CD4-positive, alpha-beta T cell (primary cell): ENCODE measurements at regions of chr7 and their contacts with region 1.

Region 1: GRCh38 chr7:44490351-44491200 is at the start of gene NUDCD3:
- DNase-seq: peak; percentile 71 to 91 (median 78)
- ATAC-seq: peak; percentile 71
- H3K4me3 ChIP-seq: peak within 1 kb of the TSS; percentile 84
- H3K4me3 Mint-ChIP-seq: peak within 1 kb of the TSS; percentile 84
- H3K27ac ChIP-seq: peak within 1 kb of the TSS; percentile 95 to 97
- H3K27ac Mint-ChIP-seq: peak within 1 kb of the TSS; percentile 91
- H3K4me1 ChIP-seq: peaks cover 32% of the 10 kb centered on the region
- H3K4me1 Mint-ChIP-seq: peaks cover 48% of the 10 kb centered on the region
- H3K27me3 ChIP-seq: no peaks in the 10 kb centered on the region
- H3K27me3 Mint-ChIP-seq: peaks cover 3% of the 10 kb centered on the region
- CTCF ChIP-seq: peak; percentile 28
- total RNA-seq, gene NUDCD3: 56.6 to 60.6 TPM

Region 2: GRCh38 chr7:43925984-43926797 is 564.4 kb before region 1 on chr7 and contains the start of gene UBE2D4:
- CTCF ChIA-PET with region 1: no interaction called
- POLR2A ChIA-PET with region 1: interaction called, 4 read pairs
- intact Hi-C with region 1: loop called in 1 of 2 experiments (anchors 5 kb)
- DNase-seq: peak; percentile 80 to 93 (median 86)
- ATAC-seq: peak; percentile 85
- H3K4me3 ChIP-seq: peak within 1 kb of the TSS; percentile 67
- H3K4me3 Mint-ChIP-seq: peak within 1 kb of the TSS; percentile 95
- H3K27ac ChIP-seq: peak within 1 kb of the TSS; percentile 80 to 89
- H3K27ac Mint-ChIP-seq: peak within 1 kb of the TSS; percentile 97
- H3K4me1 ChIP-seq: peaks cover 33% of the 10 kb centered on the region
- H3K4me1 Mint-ChIP-seq: peaks cover 48% of the 10 kb centered on the region
- H3K27me3 ChIP-seq: no peaks in the 10 kb centered on the region
- H3K27me3 Mint-ChIP-seq: no peaks in the 10 kb centered on the region
- CTCF ChIP-seq: no peak
- total RNA-seq, gene UBE2D4: 6.1 to 7.8 TPM

Region 3: GRCh38 chr7:44112231-44113000 is 378.2 kb before region 1 on chr7:
- CTCF ChIA-PET with region 1: no interaction called
- POLR2A ChIA-PET with region 1: no interaction called
- intact Hi-C with region 1: no loop called
- DNase-seq: no peak
- ATAC-seq: no peak
- H3K4me3 ChIP-seq: no peak overlapping the region
- H3K4me3 Mint-ChIP-seq: no peak overlapping the region
- H3K27ac ChIP-seq: no peak overlapping the region
- H3K27ac Mint-ChIP-seq: no peak overlapping the region
- H3K4me1 ChIP-seq: no peaks in the 10 kb centered on the region
- H3K4me1 Mint-ChIP-seq: no peaks in the 10 kb centered on the region
- H3K27me3 ChIP-seq: no peaks in the 10 kb centered on the region
- H3K27me3 Mint-ChIP-seq: no peaks in the 10 kb centered on the region
- CTCF ChIP-seq: no peak

Region 4: DNA sequence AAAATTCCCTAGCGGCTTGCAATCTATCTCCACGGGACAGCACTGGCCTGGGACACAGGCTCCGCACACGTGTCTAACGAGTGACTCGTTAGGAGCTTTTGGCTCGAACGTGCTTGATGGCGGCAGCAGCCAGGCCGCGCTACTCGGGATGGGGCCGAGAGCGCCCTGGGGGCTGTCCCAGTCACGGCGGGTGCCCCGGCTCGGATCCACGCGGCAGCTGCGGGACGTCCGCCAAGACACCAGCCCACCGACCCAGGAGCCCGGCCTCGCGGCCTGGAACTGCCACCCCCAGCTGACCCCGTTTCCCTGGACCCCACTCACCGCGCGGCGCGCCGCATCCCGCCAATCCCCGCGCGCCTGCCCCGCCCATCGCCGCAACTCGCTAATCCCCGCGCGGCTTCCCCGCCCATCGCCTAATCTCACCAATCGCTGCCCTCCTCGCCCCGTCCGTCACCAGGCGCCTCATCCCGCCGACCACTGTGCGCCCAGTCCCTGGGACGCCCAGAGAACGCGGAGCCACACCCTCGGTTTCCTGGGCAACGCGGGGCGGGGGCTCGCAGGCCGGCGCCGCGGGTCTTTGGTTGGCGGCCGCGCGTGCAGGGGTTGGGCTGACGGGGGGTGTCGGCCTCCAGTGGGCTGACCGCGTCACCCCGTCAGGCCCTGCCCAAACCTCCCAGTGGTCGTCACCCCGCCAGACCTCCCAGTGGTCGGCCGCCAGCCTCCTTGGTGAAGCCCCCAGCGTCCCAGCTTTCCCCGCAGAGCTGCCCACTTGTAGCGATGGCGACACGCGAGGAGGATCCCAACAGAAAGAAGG is 367.2 kb before region 1 on chr7 and contains the start of gene POLD2:
- CTCF ChIA-PET with region 1: interaction called, 3 read pairs
- POLR2A ChIA-PET with region 1: interaction called, 15 read pairs
- intact Hi-C with region 1: loop called in 1 of 2 experiments (anchors 10 kb)
- DNase-seq: peak; percentile 91 to 98 (median 97)
- ATAC-seq: peak; percentile 98
- H3K4me3 ChIP-seq: peak within 1 kb of the TSS; percentile 82
- H3K4me3 Mint-ChIP-seq: peak within 1 kb of the TSS; percentile 92
- H3K27ac ChIP-seq: peak within 1 kb of the TSS; percentile 33 to 67
- H3K27ac Mint-ChIP-seq: peak within 1 kb of the TSS; percentile 65
- H3K4me1 ChIP-seq: peaks cover 27% of the 10 kb centered on the region
- H3K4me1 Mint-ChIP-seq: peaks cover 17% of the 10 kb centered on the region
- H3K27me3 ChIP-seq: no peaks in the 10 kb centered on the region
- H3K27me3 Mint-ChIP-seq: no peaks in the 10 kb centered on the region
- CTCF ChIP-seq: no peak
- total RNA-seq, gene POLD2: 45.2 to 48.3 TPM

Region 5: DNA sequence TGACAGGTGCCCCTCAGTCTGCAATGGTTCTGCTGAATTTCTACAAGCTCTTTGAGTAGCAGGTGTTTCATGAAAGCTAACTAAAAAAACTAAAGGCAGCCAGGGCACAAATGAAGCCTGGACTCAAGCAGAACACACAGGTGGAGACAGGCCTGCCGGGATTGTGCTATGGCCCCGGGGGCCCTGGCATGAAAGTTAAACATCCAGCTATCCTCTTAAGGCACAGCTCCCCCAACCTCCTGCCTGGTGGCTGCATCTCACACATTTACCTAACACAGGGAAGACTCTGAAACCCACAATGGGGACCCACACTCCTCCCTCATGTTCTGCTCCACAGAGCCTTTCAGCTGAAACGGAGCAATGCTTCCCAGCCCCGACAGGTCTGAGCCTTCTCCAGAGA is 88.9 kb before region 1 on chr7:
- CTCF ChIA-PET with region 1: no interaction called
- POLR2A ChIA-PET with region 1: no interaction called
- intact Hi-C with region 1: no loop called
- DNase-seq: no peak
- ATAC-seq: no peak
- H3K4me3 ChIP-seq: no peak overlapping the region
- H3K4me3 Mint-ChIP-seq: no peak overlapping the region
- H3K27ac ChIP-seq: no peak overlapping the region
- H3K27ac Mint-ChIP-seq: no peak overlapping the region
- H3K4me1 ChIP-seq: no peaks in the 10 kb centered on the region
- H3K4me1 Mint-ChIP-seq: peaks cover 10% of the 10 kb centered on the region
- H3K27me3 ChIP-seq: no peaks in the 10 kb centered on the region
- H3K27me3 Mint-ChIP-seq: no peaks in the 10 kb centered on the region
- CTCF ChIP-seq: no peak

Region 6: DNA sequence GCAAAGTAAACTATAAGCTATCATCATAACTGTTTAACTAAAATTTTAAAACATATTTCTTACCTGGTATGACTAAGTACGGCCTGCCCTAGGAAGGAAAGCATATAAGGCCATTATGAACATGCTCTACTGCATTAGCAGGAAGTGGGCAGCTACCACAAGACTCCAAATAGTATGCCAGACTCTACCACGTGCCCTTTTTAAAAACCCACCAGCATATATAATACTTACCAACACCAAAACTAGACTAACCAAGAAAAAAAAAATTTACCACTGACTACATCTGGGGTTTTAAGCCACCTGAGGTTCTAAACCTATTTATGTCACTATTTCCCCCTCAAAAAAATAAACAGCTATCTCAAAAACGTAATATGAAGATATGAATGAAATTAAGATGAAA is 30.3 kb before region 1 on chr7:
- CTCF ChIA-PET with region 1: interaction called, 6 read pairs
- POLR2A ChIA-PET with region 1: interaction called, 52 read pairs
- intact Hi-C with region 1: no loop called
- DNase-seq: peak in 12 of 14 experiments; percentile 10 to 90 (median 40)
- ATAC-seq: peak; percentile 95
- H3K4me3 ChIP-seq: no peak overlapping the region
- H3K4me3 Mint-ChIP-seq: peak overlapping the region; percentile 57
- H3K27ac ChIP-seq: peak overlapping the region in 1 of 2 donors; percentile 12
- H3K27ac Mint-ChIP-seq: peak overlapping the region; percentile 71
- H3K4me1 ChIP-seq: peaks cover 37% of the 10 kb centered on the region
- H3K4me1 Mint-ChIP-seq: peaks cover 85% of the 10 kb centered on the region
- H3K27me3 ChIP-seq: no peaks in the 10 kb centered on the region
- H3K27me3 Mint-ChIP-seq: no peaks in the 10 kb centered on the region
- CTCF ChIP-seq: no peak

Region 7: GRCh38 chr7:44573464-44574286 is 83.1 kb after region 1 on chr7 and contains the start of gene DDX56:
- CTCF ChIA-PET with region 1: no interaction called
- POLR2A ChIA-PET with region 1: interaction called, 43 read pairs
- intact Hi-C with region 1: loop called (anchors 5 kb)
- DNase-seq: peak; percentile 83 to 97 (median 90)
- ATAC-seq: peak; percentile 96
- H3K4me3 ChIP-seq: peak within 1 kb of the TSS; percentile 71
- H3K4me3 Mint-ChIP-seq: peak within 1 kb of the TSS; percentile 95
- H3K27ac ChIP-seq: peak within 1 kb of the TSS; percentile 77 to 82
- H3K27ac Mint-ChIP-seq: peak within 1 kb of the TSS; percentile 99
- H3K4me1 ChIP-seq: peaks cover 35% of the 10 kb centered on the region
- H3K4me1 Mint-ChIP-seq: peaks cover 48% of the 10 kb centered on the region
- H3K27me3 ChIP-seq: no peaks in the 10 kb centered on the region
- H3K27me3 Mint-ChIP-seq: no peaks in the 10 kb centered on the region
- CTCF ChIP-seq: no peak
- total RNA-seq, gene DDX56: 126 to 127 TPM

Region 8: GRCh38 chr7:44748045-44748947 is 257.7 kb after region 1 on chr7 and contains the start of gene ZMIZ2:
- CTCF ChIA-PET with region 1: no interaction called
- POLR2A ChIA-PET with region 1: no interaction called
- intact Hi-C with region 1: loop called in 1 of 2 experiments (anchors 10 kb)
- DNase-seq: peak; percentile 85 to 97 (median 92)
- ATAC-seq: peak; percentile 85
- H3K4me3 ChIP-seq: peak within 1 kb of the TSS; percentile 87
- H3K4me3 Mint-ChIP-seq: peak within 1 kb of the TSS; percentile 84
- H3K27ac ChIP-seq: peak within 1 kb of the TSS; percentile 70 to 75
- H3K27ac Mint-ChIP-seq: peak within 1 kb of the TSS; percentile 86
- H3K4me1 ChIP-seq: peaks cover 37% of the 10 kb centered on the region
- H3K4me1 Mint-ChIP-seq: peaks cover 43% of the 10 kb centered on the region
- H3K27me3 ChIP-seq: no peaks in the 10 kb centered on the region
- H3K27me3 Mint-ChIP-seq: no peaks in the 10 kb centered on the region
- CTCF ChIP-seq: no peak
- total RNA-seq, gene ZMIZ2: 81.5 to 82.0 TPM

Region 9: DNA sequence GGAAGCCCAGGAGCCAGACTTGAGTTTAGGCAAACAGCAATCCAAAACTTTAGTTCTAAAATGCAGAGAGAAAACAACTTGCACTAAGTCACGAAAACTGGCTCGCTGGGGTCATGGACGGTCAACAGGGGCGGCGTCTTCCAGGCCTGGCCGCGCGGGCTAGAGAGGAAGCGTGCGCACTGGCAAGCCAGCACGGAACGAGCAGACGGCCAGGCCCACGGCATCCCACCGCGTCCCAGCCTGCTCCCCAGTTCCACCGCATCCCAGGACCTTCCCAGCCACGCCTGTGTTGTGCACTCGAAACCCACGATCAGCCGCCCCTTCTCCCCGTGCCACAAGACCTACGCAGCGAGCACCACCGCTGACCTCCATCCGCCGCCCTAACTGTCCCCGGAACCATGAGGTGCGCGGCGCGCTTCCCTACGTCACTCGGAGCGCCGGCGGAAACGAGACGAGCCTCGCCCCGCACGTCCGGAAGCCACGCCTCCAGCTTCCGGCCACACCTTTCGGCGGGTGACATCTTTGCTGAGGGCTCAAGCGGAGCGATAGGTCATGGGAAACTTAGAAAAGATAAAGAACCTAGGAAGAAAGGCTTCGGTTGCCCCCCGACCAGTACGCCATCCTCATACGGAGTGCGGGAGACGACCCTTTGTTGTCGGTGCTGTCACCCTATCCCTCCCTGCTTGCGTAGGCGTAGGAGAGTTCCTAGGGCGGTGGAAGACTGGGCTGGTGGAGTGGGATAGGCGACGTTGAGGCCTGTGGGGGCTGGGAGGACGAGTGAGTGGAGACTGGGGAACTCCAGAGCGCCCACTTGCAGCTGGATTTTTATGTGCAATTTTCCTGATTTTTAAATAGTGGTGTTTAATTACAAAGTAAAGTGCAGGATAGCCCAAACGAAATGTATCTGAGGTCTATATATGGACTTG is 621.0 kb after region 1 on chr7 and contains the start of gene TBRG4:
- CTCF ChIA-PET with region 1: no interaction called
- POLR2A ChIA-PET with region 1: interaction called, 12 read pairs
- intact Hi-C with region 1: loop called in 1 of 2 experiments (anchors 5 kb)
- DNase-seq: peak; percentile 86 to 98 (median 91)
- ATAC-seq: peak; percentile 78
- H3K4me3 ChIP-seq: peak within 1 kb of the TSS; percentile 94
- H3K4me3 Mint-ChIP-seq: peak within 1 kb of the TSS; percentile 98
- H3K27ac ChIP-seq: peak within 1 kb of the TSS; percentile 99
- H3K27ac Mint-ChIP-seq: peak within 1 kb of the TSS; percentile 96
- H3K4me1 ChIP-seq: peaks cover 51% of the 10 kb centered on the region
- H3K4me1 Mint-ChIP-seq: peaks cover 55% of the 10 kb centered on the region
- H3K27me3 ChIP-seq: no peaks in the 10 kb centered on the region
- H3K27me3 Mint-ChIP-seq: peaks cover 9% of the 10 kb centered on the region
- CTCF ChIP-seq: no peak
- total RNA-seq, gene TBRG4: 104 to 105 TPM